ENCODE measurements at regions of chr1 and their contacts with region 1.

Region 1: DNA sequence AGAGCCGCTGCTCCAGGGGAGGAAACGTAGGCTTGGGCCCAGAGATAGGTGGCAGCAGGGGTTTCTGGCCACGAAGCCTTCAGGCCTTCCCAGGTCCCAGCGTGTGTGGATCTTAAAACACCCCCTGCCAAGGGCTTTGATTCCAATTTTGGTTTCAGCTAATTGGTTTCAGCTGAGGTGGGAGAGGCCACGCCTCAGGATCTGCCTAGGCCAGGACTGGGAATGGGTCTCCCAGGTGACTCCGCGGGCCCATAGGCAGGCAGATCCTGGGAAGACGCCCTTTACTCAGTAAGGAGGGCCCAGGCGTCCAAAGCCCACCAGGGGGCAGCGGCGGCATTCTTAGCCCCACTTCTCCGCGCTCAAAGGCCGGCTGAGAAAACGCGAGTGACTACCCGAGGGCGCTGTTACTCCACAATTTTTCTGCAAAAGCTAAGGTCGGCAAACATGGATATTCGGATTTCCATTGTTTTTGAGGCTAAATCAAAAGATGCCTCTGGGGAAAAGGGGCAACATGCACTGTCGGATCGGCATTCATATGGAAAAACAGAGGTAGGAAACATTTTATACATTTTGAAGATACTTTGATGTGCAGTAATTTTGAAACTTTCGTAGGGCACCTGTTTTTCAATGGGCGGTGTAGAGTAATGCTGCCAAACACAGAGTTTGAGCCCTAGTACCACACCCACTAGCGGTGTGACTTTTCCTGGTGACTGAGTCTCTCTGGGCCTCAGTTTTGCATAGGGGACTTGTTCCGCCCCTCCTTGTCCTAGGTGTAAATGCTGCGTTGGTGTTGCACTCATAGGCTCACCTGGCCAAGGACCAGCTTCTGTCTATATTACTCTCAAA is 31.8 kb upstream of the BCL10 start:
- DNase-seq: peak; percentile 85 to 87 (median 87)
- ATAC-seq: peak; percentile 100
- H3K4me3 ChIP-seq: no peak overlapping the region
- H3K27ac ChIP-seq: no peak overlapping the region
- H3K4me1 ChIP-seq: no peaks in the 10 kb centered on the region
- H3K27me3 ChIP-seq: no peaks in the 10 kb centered on the region
- CTCF ChIP-seq: peak; percentile 97 to 98 (median 98)
- POLR2A ChIP-seq: no peak

Region 2: GRCh38 chr1:85502625-85503083 is 194.4 kb after region 1 on chr1:
- intact Hi-C with region 1: loop called in 1 of 2 experiments (anchors 10 kb)
- DNase-seq: peak in 2 of 3 donors; percentile 20 to 64
- ATAC-seq: peak; percentile 94 to 98 (median 97)
- H3K4me3 ChIP-seq: no peak overlapping the region
- H3K27ac ChIP-seq: peak overlapping the region in 1 of 3 donors; percentile 11
- H3K4me1 ChIP-seq: peaks cover 0 to 7% (median 0%) of the 10 kb centered on the region in 4 donors
- H3K27me3 ChIP-seq: no peaks in the 10 kb centered on the region
- CTCF ChIP-seq: peak; percentile 61 to 73 (median 69)
- POLR2A ChIP-seq: no peak

Measured in right lobe of liver (tissue), 6 donors.